ENCODE measurements at regions of chr20 and their contacts with region 1.

Region 1: DNA sequence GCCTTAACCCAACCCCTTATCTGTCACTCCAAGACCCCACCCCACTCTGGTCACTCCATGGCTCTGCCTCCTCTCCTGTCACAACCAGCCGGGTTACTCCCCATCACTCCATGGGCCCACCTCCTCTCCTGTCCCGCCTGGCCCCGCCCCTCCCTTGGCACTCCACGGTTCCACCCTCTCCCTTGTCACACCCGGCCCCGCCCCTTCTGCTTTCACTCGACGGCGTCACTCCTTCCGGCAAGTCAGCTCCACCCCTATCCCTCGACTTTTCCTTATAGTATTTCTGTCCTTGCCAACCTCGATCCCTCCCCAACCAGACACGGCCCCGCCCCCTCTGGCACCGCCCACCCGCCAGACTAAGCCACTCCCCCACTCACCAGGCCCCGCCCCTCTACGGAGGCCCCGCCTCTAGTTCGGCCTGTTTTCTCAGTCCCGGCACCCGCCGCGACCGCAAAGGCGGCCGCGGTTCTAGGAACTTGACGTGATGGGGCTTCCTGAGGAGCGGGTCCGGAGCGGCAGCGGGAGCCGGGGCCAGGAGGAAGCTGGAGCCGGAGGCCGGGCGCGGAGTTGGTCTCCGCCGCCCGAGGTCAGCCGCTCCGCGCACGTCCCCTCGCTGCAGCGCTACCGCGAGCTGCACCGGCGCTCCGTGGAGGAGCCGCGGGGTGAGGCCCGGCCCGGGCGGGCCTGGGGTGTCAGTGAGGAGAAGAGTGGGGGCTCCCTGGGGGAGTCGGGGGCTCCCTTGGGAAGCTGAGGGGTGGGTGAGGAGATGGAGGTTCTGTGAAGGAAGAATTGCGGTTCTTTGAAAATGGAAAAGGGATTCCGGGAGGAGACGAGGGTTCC is at the start of gene ACSS2:
- DNase-seq: peak; percentile 96
- H3K4me3 Mint-ChIP-seq: peak within 1 kb of the TSS; percentile 95
- H3K27ac Mint-ChIP-seq: peak within 1 kb of the TSS; percentile 84
- H3K4me1 Mint-ChIP-seq: peaks cover 66% of the 10 kb centered on the region
- H3K27me3 Mint-ChIP-seq: peaks cover 2% of the 10 kb centered on the region
- total RNA-seq, gene ACSS2: 51.3 and 59.4 TPM in 2 replicates

Region 2: DNA sequence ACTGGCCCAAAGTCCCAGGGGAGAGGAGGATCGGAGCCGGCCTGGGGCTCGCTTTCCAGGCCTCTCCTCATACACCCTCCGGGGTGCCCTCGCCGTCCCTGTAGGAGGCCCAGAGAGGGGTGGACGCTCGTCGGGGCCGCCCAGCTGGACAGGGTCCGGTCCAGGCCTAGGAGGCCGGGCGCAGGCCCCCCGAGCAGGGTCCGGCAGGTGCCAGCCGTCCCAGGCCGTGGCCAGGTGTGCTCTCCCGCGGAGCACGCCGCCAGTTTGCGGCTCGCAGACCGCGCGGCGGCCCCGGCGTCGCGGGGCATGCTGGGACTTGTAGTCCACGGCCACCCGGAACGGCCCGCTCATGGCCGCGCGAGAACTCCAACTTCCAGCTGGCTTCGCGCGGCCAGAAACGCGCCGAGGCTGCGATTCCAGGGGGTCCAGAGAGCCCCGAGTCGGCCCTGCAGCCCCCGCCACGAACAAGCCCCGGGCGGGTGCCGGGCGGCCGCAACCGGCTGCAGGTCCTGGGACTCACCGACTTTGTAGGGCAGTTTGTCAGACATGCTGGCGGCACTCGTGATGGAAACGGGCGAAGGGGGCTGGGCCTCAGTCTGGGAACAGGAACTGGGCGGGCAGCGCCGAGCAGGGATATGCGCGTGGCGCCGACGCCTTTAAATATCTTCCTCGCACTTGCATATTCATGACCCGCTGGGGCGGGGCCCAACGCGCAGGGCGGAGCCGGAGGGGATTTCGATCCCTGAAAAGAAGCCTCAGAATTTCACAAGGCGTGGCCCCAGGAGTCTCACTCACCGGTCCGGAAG is 573.5 kb before region 1 on chr20 and contains the start of gene AHCY:
- intact Hi-C with region 1: loop called (anchors 1 kb)
- DNase-seq: peak; percentile 93
- H3K4me3 Mint-ChIP-seq: peak within 1 kb of the TSS; percentile 87
- H3K27ac Mint-ChIP-seq: peak within 1 kb of the TSS; percentile 88
- H3K4me1 Mint-ChIP-seq: peaks cover 13% of the 10 kb centered on the region
- H3K27me3 Mint-ChIP-seq: peaks cover 1% of the 10 kb centered on the region
- total RNA-seq, gene AHCY: 120 and 122 TPM in 2 replicates

Region 3: GRCh38 chr20:34825530-34826362 is 50.6 kb before region 1 on chr20 and contains the start of gene NCOA6:
- intact Hi-C with region 1: loop called (anchors 2 kb)
- DNase-seq: peak; percentile 72
- H3K4me3 Mint-ChIP-seq: peak within 1 kb of the TSS; percentile 98
- H3K27ac Mint-ChIP-seq: peak within 1 kb of the TSS; percentile 94
- H3K4me1 Mint-ChIP-seq: peaks cover 29% of the 10 kb centered on the region
- H3K27me3 Mint-ChIP-seq: peaks cover 11% of the 10 kb centered on the region
- total RNA-seq, gene NCOA6: 29.1 and 30.9 TPM in 2 replicates

Region 4: GRCh38 chr20:34842143-34842542 is 34.2 kb before region 1 on chr20:
- intact Hi-C with region 1: no loop called
- DNase-seq: no peak
- H3K4me3 Mint-ChIP-seq: no peak overlapping the region
- H3K27ac Mint-ChIP-seq: no peak overlapping the region
- H3K4me1 Mint-ChIP-seq: no peaks in the 10 kb centered on the region
- H3K27me3 Mint-ChIP-seq: peaks cover 18% of the 10 kb centered on the region

Region 5: GRCh38 chr20:34891166-34892062 is 15.0 kb after region 1 on chr20:
- intact Hi-C with region 1: loop called (anchors 1 kb)
- DNase-seq: no peak
- H3K4me3 Mint-ChIP-seq: peak overlapping the region; percentile 14
- H3K27ac Mint-ChIP-seq: peak overlapping the region; percentile 80
- H3K4me1 Mint-ChIP-seq: peaks cover 45% of the 10 kb centered on the region
- H3K27me3 Mint-ChIP-seq: no peaks in the 10 kb centered on the region

Region 6: GRCh38 chr20:34922654-34923424 is 46.5 kb after region 1 on chr20:
- intact Hi-C with region 1: loop called (anchors 1 kb)
- DNase-seq: no peak
- H3K4me3 Mint-ChIP-seq: no peak overlapping the region
- H3K27ac Mint-ChIP-seq: no peak overlapping the region
- H3K4me1 Mint-ChIP-seq: peaks cover 44% of the 10 kb centered on the region
- H3K27me3 Mint-ChIP-seq: no peaks in the 10 kb centered on the region

Region 7: DNA sequence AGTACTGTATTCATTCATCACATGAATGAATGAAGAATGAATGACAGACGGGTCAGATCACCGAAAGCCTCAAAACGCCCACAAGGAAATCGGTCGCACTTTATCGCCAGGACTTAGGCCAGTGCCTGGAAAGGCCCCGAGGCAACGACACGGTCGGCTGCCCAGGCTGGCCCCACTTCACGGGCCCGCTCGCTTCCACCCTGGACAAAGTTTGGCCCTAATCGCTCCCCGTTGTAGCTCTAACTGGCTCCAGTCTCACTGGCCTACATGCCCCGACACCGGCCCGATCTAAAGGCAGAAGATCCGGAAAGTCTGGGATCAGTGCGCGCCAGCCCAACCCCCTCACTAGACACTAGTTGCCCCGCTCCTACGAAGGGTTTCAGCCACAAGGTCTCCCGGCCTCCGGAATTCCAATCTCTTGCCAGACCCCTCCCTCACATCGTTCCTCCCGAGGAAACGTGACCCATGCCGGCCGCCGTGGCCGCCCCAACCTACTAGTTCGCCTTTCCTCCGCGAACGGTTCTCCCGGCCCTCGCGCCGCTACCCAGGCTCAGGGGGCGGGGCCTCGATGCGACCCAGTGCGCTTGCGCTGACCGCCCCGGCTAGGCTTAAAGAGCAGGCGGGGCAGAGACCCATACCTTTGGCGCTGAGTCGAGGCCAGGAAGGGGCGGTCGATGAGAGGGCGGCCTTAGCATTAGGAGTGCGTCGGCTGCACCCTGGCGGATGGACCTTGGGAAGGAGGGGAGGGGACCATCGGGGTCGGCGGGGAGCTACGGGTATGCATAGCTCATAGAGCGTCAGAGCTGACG is 79.1 kb after region 1 on chr20 and contains the starts of genes GSS and MYH7B:
- intact Hi-C with region 1: loop called (anchors 1 kb)
- DNase-seq: peak; percentile 96
- H3K4me3 Mint-ChIP-seq: peak within 1 kb of the TSS; percentile 97
- H3K27ac Mint-ChIP-seq: peak within 1 kb of the TSS; percentile 97
- H3K4me1 Mint-ChIP-seq: peaks cover 15% of the 10 kb centered on the region
- H3K27me3 Mint-ChIP-seq: no peaks in the 10 kb centered on the region
- total RNA-seq, gene GSS: 70.5 and 77.1 TPM in 2 replicates
- total RNA-seq, gene MYH7B: 0.30 and 0.34 TPM in 2 replicates

Region 8: GRCh38 chr20:35207950-35208611 is 331.7 kb after region 1 on chr20:
- intact Hi-C with region 1: loop called (anchors 1 kb)
- DNase-seq: peak; percentile 63
- H3K4me3 Mint-ChIP-seq: no peak overlapping the region
- H3K27ac Mint-ChIP-seq: no peak overlapping the region
- H3K4me1 Mint-ChIP-seq: no peaks in the 10 kb centered on the region
- H3K27me3 Mint-ChIP-seq: no peaks in the 10 kb centered on the region

Measured in activated T-helper 2 cell treated with anti-CD3 and anti-CD28 coated beads, Interferon-gamma antibody, Interleukin-2, Interleukin-4, amounts not matched to agents 10 μg/mL and 5 μg/mL and 100 μg/mL, durations not matched to agents 14 hours and 24 hours and 36 hours (primary cell).